ENCODE measurements at regions of chr3 and their contacts with region 1.

Region 1: DNA sequence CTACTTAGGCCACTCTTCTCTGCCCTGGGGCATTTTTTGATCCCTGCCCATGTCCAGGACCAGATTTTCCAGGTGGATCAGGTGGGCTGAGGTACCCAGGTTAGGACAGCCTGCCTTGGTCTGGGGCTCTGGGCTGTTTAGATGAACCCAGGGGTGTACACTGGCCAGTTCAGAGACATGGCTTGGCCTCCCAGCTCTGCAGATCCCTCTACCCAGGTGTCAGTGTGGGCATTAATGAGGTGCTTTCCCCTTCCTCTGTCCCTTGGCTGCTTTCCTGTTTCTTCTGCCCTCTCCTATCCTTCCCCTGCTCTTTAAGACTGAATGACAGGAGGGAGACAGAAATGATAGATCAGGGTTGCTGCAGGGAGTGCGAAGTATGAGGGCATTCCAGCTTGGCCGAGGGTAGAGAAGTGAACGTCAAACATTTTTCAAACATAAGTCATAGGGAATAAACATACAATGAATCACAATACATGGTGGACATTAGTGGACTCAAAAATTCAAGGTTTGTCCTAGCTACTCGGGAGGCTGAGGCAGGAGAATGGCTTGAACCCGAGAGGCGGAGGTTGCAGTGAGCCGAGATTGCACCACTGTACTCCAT is 30.5 kb downstream of the RTP1 start:
- DNase-seq: peak; percentile 40
- H3K4me3 ChIP-seq: no peak overlapping the region
- H3K27ac ChIP-seq: no peak overlapping the region
- H3K4me1 ChIP-seq: no peaks in the 10 kb centered on the region
- H3K27me3 ChIP-seq: no peaks in the 10 kb centered on the region
- CTCF ChIP-seq: no peak

Region 2: DNA sequence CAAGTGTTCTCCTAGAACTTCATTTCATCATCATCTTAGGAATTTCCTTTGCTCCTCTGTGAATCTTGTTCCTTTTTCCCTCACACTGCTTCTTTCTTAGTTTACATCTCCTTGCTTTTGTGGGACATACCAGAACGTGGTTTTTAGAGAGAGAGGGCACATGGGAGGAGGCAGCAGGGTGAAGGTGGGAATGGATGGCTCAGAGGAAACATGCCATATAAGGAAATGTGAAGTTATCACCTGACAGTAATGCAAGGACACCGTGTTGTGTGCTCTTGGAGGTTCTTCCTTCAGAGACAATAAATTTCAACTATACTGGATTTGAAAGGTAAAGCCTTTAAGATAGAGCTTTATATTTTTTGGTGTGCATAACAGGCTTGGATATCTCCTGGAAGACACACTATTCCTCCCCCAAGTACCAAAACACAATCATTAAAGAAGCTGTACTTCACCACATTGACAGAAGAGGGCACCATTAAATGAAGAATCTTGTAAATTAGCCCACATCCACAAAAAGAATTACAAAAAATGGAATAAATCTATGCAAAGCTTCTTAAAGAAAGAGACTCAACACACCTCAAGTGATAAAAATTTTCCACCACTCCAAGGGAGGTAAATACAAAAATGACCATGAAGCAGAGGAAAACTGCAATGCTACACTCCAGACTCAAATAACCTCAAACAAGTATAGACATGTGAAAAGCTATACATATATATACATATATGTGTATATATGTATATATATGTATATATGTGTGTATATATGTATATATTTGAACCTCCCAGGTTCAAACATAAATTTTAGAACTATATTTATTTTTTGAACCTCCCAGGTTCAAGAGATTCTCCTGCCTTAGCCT is 114.6 kb before region 1 on chr3:
- CTCF ChIA-PET with region 1: no interaction called
- dilution Hi-C with region 1: no loop called
- in situ Hi-C with region 1: no loop called
- intact Hi-C with region 1: loop called (anchors 5 kb)
- DNase-seq: peak; percentile 24
- H3K4me3 ChIP-seq: no peak overlapping the region
- H3K27ac ChIP-seq: no peak overlapping the region
- H3K4me1 ChIP-seq: peaks cover 7% of the 10 kb centered on the region
- H3K27me3 ChIP-seq: no peaks in the 10 kb centered on the region
- CTCF ChIP-seq: peak; percentile 48 to 54

Measured in mammary epithelial cell (primary cell).